Activated B cell treated with CpG ODN at 0.5 μM for 24 hours (primary cell): ENCODE measurements at regions of chr19 and their contacts with region 1.

Region 1: GRCh38 chr19:2610637-2611482 is 91.6 kb downstream of the GNG7 start:
- DNase-seq: peak; percentile 89
- ATAC-seq: peak; percentile 43
- H3K4me3 Mint-ChIP-seq: peak overlapping the region; percentile 89
- H3K27ac Mint-ChIP-seq: peak overlapping the region; percentile 94
- H3K4me1 Mint-ChIP-seq: peaks cover 86% of the 10 kb centered on the region
- H3K27me3 Mint-ChIP-seq: no peaks in the 10 kb centered on the region
- CTCF ChIP-seq: peak; percentile 52

Region 2: GRCh38 chr19:1855040-1855827 is 755.6 kb before region 1 on chr19:
- CTCF ChIA-PET with region 1: no interaction called
- POLR2A ChIA-PET with region 1: no interaction called
- intact Hi-C with region 1: loop called (anchors 10 kb)
- DNase-seq: peak; percentile 62
- ATAC-seq: peak; percentile 70
- H3K4me3 Mint-ChIP-seq: peak overlapping the region; percentile 73
- H3K27ac Mint-ChIP-seq: peak overlapping the region; percentile 89
- H3K4me1 Mint-ChIP-seq: peaks cover 73% of the 10 kb centered on the region
- H3K27me3 Mint-ChIP-seq: no peaks in the 10 kb centered on the region
- CTCF ChIP-seq: no peak

Region 3: DNA sequence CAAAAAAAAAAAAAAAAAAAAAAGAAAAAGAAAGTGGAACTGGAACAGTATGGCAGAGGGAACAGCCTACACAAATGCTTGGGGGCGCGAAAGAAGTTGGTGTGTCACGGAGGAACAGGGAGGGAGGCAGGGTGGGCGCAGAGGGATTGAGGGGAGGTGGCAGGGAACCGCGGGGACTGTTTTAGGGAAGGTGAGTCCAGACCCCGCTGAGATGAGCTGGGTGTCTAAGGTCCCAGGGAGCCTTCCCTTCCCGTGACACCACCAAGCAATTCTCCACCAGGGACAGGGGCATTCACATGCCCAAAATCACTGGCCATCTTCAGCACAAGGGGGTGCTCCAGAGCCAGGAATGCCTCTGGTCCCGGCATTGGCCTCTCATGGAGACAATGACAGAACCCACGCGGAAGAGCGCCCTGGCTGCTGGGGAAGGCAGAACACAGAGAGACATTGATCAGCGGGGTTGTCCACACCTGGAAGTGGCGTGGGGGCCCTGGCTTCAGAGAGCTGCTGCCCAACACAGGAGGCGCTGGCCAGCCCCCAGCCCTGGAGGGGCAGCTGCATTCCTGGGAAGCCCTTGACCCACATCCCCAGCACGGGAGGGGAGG is 335.8 kb before region 1 on chr19:
- CTCF ChIA-PET with region 1: interaction called, 3 read pairs
- POLR2A ChIA-PET with region 1: interaction called, 10 read pairs
- intact Hi-C with region 1: no loop called
- DNase-seq: no peak
- ATAC-seq: no peak
- H3K4me3 Mint-ChIP-seq: peak overlapping the region; percentile 28
- H3K27ac Mint-ChIP-seq: peak overlapping the region; percentile 66
- H3K4me1 Mint-ChIP-seq: peaks cover 52% of the 10 kb centered on the region
- H3K27me3 Mint-ChIP-seq: no peaks in the 10 kb centered on the region
- CTCF ChIP-seq: no peak

Region 4: GRCh38 chr19:2427429-2428320 is 183.2 kb before region 1 on chr19 and contains the start of gene TIMM13:
- CTCF ChIA-PET with region 1: interaction called, 5 read pairs
- POLR2A ChIA-PET with region 1: interaction called, 4 read pairs
- intact Hi-C with region 1: loop called (anchors 1 kb)
- DNase-seq: peak; percentile 99
- ATAC-seq: peak; percentile 94
- H3K4me3 Mint-ChIP-seq: peak within 1 kb of the TSS; percentile 90
- H3K27ac Mint-ChIP-seq: peak within 1 kb of the TSS; percentile 95
- H3K4me1 Mint-ChIP-seq: peaks cover 21% of the 10 kb centered on the region
- H3K27me3 Mint-ChIP-seq: no peaks in the 10 kb centered on the region
- CTCF ChIP-seq: no peak
- total RNA-seq, gene TIMM13: 63.9 and 65.3 TPM in 2 replicates

Region 5: GRCh38 chr19:2543463-2544442 is 67.1 kb before region 1 on chr19:
- CTCF ChIA-PET with region 1: interaction called, 14 read pairs
- POLR2A ChIA-PET with region 1: interaction called, 25 read pairs
- intact Hi-C with region 1: loop called (anchors 2 kb)
- DNase-seq: peak; percentile 68
- ATAC-seq: peak; percentile 72
- H3K4me3 Mint-ChIP-seq: peak overlapping the region; percentile 66
- H3K27ac Mint-ChIP-seq: peak overlapping the region; percentile 74
- H3K4me1 Mint-ChIP-seq: peaks cover 37% of the 10 kb centered on the region
- H3K27me3 Mint-ChIP-seq: no peaks in the 10 kb centered on the region
- CTCF ChIP-seq: no peak

Region 6: GRCh38 chr19:2561895-2562294 is 49.0 kb before region 1 on chr19:
- CTCF ChIA-PET with region 1: interaction called, 5 read pairs
- POLR2A ChIA-PET with region 1: interaction called, 47 read pairs
- intact Hi-C with region 1: loop called (anchors 1 kb)
- DNase-seq: peak; percentile 70
- ATAC-seq: peak; percentile 92
- H3K4me3 Mint-ChIP-seq: peak overlapping the region; percentile 87
- H3K27ac Mint-ChIP-seq: peak overlapping the region; percentile 94
- H3K4me1 Mint-ChIP-seq: peaks cover 60% of the 10 kb centered on the region
- H3K27me3 Mint-ChIP-seq: no peaks in the 10 kb centered on the region
- CTCF ChIP-seq: no peak

Region 7: GRCh38 chr19:2627319-2627829 is 16.5 kb after region 1 on chr19:
- CTCF ChIA-PET with region 1: interaction called, 336 read pairs
- POLR2A ChIA-PET with region 1: interaction called, 582 read pairs
- intact Hi-C with region 1: no loop called
- DNase-seq: peak; percentile 68
- ATAC-seq: peak; percentile 62
- H3K4me3 Mint-ChIP-seq: peak overlapping the region; percentile 76
- H3K27ac Mint-ChIP-seq: peak overlapping the region; percentile 94
- H3K4me1 Mint-ChIP-seq: peaks cover 95% of the 10 kb centered on the region
- H3K27me3 Mint-ChIP-seq: no peaks in the 10 kb centered on the region
- CTCF ChIP-seq: no peak